Heart right ventricle (tissue), 16 donors: ENCODE measurements at regions of chr6 and their contacts with region 1.

Region 1: GRCh38 chr6:155455766-155456165 is at the start of gene NOX3:
- DNase-seq: no peak
- ATAC-seq: no peak
- H3K4me3 ChIP-seq: no peak within 1 kb of the TSS
- H3K27ac ChIP-seq: no peak within 1 kb of the TSS
- H3K4me1 ChIP-seq: no peaks in the 10 kb centered on the region
- H3K27me3 ChIP-seq: peaks cover 0 to 19% (median 0%) of the 10 kb centered on the region in 7 donors
- CTCF ChIP-seq: no peak
- total RNA-seq, gene NOX3: not detected

Region 2: GRCh38 chr6:155645325-155645724 is 189.6 kb after region 1 on chr6:
- intact Hi-C with region 1: no loop called
- DNase-seq: no peak
- ATAC-seq: no peak
- H3K4me3 ChIP-seq: no peak overlapping the region
- H3K27ac ChIP-seq: no peak overlapping the region
- H3K4me1 ChIP-seq: peaks cover 0 to 20% (median 4%) of the 10 kb centered on the region in 9 donors
- H3K27me3 ChIP-seq: no peaks in the 10 kb centered on the region
- CTCF ChIP-seq: no peak

Region 3: GRCh38 chr6:155968921-155969320 is 513.2 kb after region 1 on chr6:
- intact Hi-C with region 1: loop called in 1 of 10 experiments (anchors 5 kb)
- DNase-seq: no peak
- ATAC-seq: no peak
- H3K4me3 ChIP-seq: no peak overlapping the region
- H3K27ac ChIP-seq: no peak overlapping the region
- H3K4me1 ChIP-seq: no peaks in the 10 kb centered on the region
- H3K27me3 ChIP-seq: no peaks in the 10 kb centered on the region
- CTCF ChIP-seq: no peak